PC-9 (cell line): ENCODE measurements at regions of chr5 and their contacts with region 1.

Region 1: GRCh38 chr5:83564069-83564749 is 92.7 kb downstream of the VCAN start:
- DNase-seq: peak in 1 of 2 experiments; percentile 35
- H3K4me3 ChIP-seq: no peak overlapping the region
- H3K27ac ChIP-seq: peak overlapping the region; percentile 49
- H3K4me1 ChIP-seq: peaks cover 16% of the 10 kb centered on the region
- H3K27me3 ChIP-seq: peaks cover 8% of the 10 kb centered on the region; the same call in 1 of the 2 replicates
- CTCF ChIP-seq: peak; percentile 82

Region 2: GRCh38 chr5:82312373-82312856 is 1251.8 kb before region 1 on chr5:
- CTCF ChIA-PET with region 1: no interaction called
- POLR2A ChIA-PET with region 1: no interaction called
- intact Hi-C with region 1: loop called (anchors 1 kb)
- DNase-seq: peak; percentile 42 to 55
- H3K4me3 ChIP-seq: no peak overlapping the region
- H3K27ac ChIP-seq: no peak overlapping the region
- H3K4me1 ChIP-seq: peaks cover 13% of the 10 kb centered on the region
- H3K27me3 ChIP-seq: no peaks in the 10 kb centered on the region
- CTCF ChIP-seq: peak; percentile 85

Region 3: DNA sequence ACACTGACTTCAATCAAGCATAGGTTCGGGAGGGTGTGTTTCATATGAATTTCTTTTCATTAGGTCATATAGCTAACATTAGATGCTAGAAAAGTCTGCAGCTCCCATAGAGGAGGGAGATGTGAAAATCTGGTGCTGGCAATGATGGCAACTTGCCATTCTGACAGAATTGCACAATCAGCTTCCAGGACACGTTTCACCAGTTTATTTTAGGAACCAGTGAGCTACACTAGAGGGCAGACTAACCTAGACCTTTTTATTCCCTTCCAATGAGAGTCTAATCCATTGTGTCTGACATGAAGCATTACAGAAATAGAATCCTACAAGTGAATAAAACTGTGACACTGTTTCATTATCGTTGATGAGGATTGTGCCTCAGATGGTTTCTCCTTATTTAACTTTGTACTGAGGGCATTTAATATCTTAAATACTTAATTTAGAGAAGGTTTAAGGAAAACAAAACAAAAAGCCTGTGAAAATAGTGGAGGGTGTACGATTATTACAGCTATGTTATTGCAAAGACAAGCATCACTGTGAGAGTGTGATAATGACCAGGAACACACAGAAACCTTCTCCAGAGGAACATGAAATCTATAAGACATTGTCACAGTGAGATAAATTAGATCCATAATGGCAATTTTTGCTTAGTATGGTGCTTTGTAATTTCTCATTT is 922.7 kb before region 1 on chr5:
- CTCF ChIA-PET with region 1: no interaction called
- POLR2A ChIA-PET with region 1: no interaction called
- intact Hi-C with region 1: loop called (anchors 5 kb)
- DNase-seq: peak; percentile 50 to 52
- H3K4me3 ChIP-seq: no peak overlapping the region
- H3K27ac ChIP-seq: no peak overlapping the region
- H3K4me1 ChIP-seq: no peaks in the 10 kb centered on the region
- H3K27me3 ChIP-seq: no peaks in the 10 kb centered on the region
- CTCF ChIP-seq: peak; percentile 68

Region 4: GRCh38 chr5:83430130-83431010 is 133.8 kb before region 1 on chr5:
- CTCF ChIA-PET with region 1: no interaction called
- POLR2A ChIA-PET with region 1: no interaction called
- intact Hi-C with region 1: no loop called
- DNase-seq: peak in 1 of 2 experiments; percentile 30
- H3K4me3 ChIP-seq: no peak overlapping the region
- H3K27ac ChIP-seq: no peak overlapping the region
- H3K4me1 ChIP-seq: no peaks in the 10 kb centered on the region
- H3K27me3 ChIP-seq: no peaks in the 10 kb centered on the region
- CTCF ChIP-seq: peak; percentile 82

Region 5: DNA sequence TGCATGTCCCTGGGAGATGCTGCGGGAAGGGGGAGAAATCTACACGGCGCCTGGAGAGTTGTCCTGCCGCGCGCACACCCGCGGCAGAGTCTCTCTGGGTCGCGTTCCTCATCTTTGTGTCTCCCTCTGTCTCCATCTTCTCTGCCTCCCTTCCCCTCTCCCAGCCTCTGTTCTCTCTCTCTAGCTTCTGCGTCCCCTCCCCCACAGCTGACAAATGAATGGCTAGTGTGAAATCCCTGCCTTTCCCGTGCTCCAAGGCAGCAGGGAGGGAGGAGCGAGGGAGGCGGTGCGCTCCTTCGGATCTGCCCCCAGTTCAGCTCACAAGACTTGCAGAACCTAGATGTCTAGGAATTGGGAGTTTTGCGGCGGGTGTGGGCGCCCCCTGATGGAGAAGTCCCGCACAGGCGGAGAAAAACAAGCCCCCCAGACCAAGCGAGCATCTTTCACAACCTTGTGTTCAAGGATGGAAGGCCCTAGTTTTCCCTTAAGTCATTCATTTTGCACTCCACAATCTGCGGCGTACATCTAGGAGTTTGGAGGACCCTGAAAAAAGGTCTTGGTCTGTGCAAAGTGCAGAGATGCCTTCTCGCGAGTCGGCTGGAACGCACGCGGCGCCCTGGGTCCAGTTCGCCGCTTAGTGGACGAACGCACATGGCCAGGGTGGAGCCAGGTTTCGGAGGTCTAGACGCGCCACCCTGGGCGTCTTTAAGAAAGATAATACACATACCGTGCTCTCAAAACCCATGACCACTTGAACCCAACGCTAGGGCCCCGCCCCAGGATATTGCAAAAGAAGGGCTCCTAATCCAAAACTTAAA is 90.7 kb before region 1 on chr5:
- CTCF ChIA-PET with region 1: no interaction called
- POLR2A ChIA-PET with region 1: no interaction called
- intact Hi-C with region 1: loop called (anchors 1 kb)
- DNase-seq: peak; percentile 40 to 75
- H3K4me3 ChIP-seq: peak overlapping the region; percentile 63
- H3K27ac ChIP-seq: no peak overlapping the region
- H3K4me1 ChIP-seq: peaks cover 7% of the 10 kb centered on the region
- H3K27me3 ChIP-seq: peaks cover 14% of the 10 kb centered on the region; the same call in 1 of the 2 replicates
- CTCF ChIP-seq: peak; percentile 81

Region 6: GRCh38 chr5:83509540-83509939 is 54.7 kb before region 1 on chr5:
- CTCF ChIA-PET with region 1: no interaction called
- POLR2A ChIA-PET with region 1: no interaction called
- intact Hi-C with region 1: no loop called
- DNase-seq: peak in 1 of 2 experiments; percentile 16
- H3K4me3 ChIP-seq: no peak overlapping the region
- H3K27ac ChIP-seq: no peak overlapping the region
- H3K4me1 ChIP-seq: no peaks in the 10 kb centered on the region
- H3K27me3 ChIP-seq: no peaks in the 10 kb centered on the region
- CTCF ChIP-seq: no peak

Region 7: GRCh38 chr5:83632874-83633273 is 68.7 kb after region 1 on chr5:
- CTCF ChIA-PET with region 1: no interaction called
- POLR2A ChIA-PET with region 1: no interaction called
- intact Hi-C with region 1: loop called (anchors 2 kb)
- DNase-seq: peak; percentile 74 to 85
- H3K4me3 ChIP-seq: no peak overlapping the region
- H3K27ac ChIP-seq: peak overlapping the region; percentile 31; the same call in 1 of the 2 replicates
- H3K4me1 ChIP-seq: peaks cover 12% of the 10 kb centered on the region
- H3K27me3 ChIP-seq: no peaks in the 10 kb centered on the region
- CTCF ChIP-seq: no peak